ENCODE measurements at regions of chr1 and their contacts with region 1.

Region 1: DNA sequence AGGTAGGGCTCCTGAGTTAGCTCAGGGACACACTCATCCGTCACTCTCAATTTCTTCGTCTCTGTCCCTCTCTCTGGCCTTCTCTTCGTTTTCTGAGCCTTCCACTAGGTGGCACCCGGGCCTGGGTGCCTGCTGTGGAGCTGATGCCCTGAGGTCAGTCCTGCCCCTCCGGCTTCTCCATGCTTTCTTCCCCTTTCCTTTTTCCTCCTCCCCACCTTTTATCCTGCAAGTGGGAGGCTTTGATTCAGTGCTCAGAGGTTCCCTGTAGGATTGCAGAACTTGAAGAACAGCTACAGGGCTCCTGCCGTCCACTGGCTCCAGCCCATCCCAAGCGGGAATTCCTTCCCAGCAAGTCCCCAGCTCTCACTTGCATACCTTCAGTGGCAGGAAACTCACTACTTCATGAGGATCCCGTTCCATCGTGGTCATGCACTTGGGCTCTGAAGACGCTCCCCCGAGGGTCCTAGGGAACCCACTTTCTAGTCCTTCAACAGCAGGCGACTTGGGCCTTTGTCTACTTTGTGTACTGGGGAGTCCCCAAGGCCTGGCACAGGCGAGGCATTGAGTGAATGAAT is 45.6 kb downstream of the SRRM1 start:
- DNase-seq: peak; percentile 85
- CTCF ChIP-seq: peak; percentile 81

Region 2: GRCh38 chr1:24664507-24665033 is 24.1 kb before region 1 on chr1:
- CTCF ChIA-PET with region 1: interaction called, 18 read pairs
- POLR2A ChIA-PET with region 1: no interaction called
- DNase-seq: no peak
- CTCF ChIP-seq: no peak

Region 3: DNA sequence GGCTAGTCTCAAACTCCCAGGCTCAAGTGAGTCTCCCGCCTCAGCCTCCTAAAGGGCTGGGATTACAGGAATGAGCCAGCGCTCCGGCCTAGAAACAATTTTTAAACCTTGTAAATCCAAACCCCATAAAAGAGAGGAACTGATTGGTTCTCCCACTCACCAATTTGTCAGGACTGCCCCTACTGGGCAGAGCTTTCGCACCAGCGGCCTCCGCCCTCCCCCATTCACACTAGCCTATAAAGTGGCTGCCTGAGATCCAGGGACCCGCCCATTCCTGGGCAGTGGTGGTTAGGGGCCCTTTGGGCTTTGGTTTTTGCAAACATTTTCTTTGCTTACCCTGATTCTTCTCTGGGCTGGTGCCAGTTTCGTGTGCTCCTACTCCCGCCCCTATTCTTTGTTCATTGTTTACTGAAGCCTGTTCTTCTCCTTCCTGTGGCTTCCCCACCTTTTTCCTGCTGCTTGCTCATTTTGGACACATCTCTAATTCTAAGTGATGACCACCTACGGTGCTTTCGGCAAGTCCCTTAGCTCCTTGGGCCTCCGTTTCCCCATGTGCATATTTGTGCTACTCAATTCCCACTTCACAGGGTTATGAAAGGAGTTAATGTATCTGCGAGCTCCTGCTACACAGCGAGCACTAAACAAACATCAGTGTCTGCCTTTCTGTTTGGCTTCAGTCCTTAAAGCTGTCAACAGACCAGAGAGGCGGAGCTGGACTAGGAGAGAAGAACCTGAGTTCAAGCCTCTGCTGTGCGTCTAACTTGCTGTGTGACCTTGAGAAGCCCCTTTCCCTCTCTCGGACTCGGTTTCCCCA is 16.8 kb after region 1 on chr1:
- CTCF ChIA-PET with region 1: interaction called, 58 read pairs
- POLR2A ChIA-PET with region 1: no interaction called
- DNase-seq: peak; percentile 77
- CTCF ChIP-seq: no peak

Region 4: GRCh38 chr1:24727501-24728216 is 39.0 kb after region 1 on chr1:
- CTCF ChIA-PET with region 1: interaction called, 17 read pairs
- POLR2A ChIA-PET with region 1: no interaction called
- DNase-seq: peak; percentile 71
- CTCF ChIP-seq: no peak

Region 5: DNA sequence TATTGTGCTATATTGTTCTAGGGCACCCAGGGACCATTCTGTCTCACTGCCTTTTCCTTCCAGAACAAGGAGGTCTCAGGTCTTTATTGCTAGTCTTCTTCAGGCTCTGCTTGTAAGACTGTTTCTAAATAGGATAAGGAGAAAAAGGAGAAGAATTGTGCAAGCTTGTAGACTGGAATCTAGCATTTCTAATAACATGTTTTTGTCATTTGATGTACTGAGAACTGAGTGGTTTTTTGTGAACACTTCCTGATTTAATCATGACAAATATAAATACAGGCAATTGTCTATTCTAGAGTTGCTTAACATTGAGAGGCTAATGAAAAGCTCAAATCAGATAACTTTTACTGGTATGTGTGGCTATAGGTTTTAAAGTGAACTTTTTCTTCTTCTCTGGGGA is 134.2 kb after region 1 on chr1:
- CTCF ChIA-PET with region 1: interaction called, 250 read pairs
- POLR2A ChIA-PET with region 1: no interaction called
- DNase-seq: no peak
- CTCF ChIP-seq: no peak

Region 6: GRCh38 chr1:24847995-24848881 is 159.5 kb after region 1 on chr1:
- CTCF ChIA-PET with region 1: interaction called, 12 read pairs
- POLR2A ChIA-PET with region 1: no interaction called
- DNase-seq: peak; percentile 89
- CTCF ChIP-seq: peak; percentile 96

Region 7: DNA sequence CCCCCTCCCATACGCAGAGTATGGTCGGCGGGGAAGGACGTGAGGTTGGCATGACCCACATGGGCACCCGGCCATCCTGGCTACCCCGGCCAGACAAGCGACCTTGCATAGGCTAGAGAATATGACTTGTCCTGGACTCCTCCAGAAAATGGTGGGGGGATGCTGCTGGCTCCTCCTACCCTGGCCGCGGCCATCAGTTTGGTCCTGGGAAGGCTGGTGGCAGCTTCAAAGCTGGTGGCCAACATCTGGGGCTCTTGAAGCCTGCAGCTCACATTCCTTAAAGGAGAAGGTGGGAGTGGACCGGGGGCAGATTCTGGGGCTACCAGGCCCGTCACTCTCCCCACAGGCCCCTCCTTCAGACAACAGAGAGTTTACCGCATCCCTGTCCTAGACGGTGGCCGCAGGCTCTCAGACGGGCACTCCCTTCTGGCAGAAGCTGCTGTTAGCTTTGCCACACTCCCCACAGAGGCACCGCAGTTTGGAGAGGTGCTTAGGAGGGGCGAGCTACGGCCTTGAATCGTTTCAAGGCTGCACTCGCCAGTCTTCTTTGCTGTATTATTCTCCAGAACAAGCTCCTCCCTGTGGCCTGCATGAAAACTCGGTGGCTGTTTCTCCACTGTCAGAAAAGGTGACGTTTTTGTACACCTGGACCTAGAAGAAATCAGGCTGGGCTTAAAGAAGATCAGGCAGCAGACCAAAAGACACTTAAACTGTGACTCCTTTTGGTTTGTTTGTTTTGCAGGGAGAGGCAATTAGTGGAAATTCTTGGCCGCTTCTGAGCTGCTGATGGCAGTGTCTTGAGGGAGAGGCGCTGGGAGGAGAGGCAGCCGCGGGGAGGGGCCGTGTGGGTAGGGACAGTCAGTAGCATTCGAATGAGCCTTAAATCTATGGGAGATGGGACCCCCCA is 173.4 kb after region 1 on chr1:
- CTCF ChIA-PET with region 1: no interaction called
- POLR2A ChIA-PET with region 1: no interaction called
- DNase-seq: no peak
- CTCF ChIP-seq: no peak

Measured in GM10248 (cell line).